H1 (cell line): ENCODE measurements at regions of chr1 and their contacts with region 1.

Region 1: GRCh38 chr1:16155532-16156410 is at the start of gene EPHA2:
- DNase-seq: peak; percentile 75 to 96
- H3K4me3 ChIP-seq: peak within 1 kb of the TSS; percentile 70 to 87 (median 81)
- H3K27ac ChIP-seq: peak within 1 kb of the TSS; percentile 53; the same call in 1 of the 2 replicates
- H3K4me1 ChIP-seq: peaks cover 5 to 41% (median 30%) of the 10 kb centered on the region in 4 experiments
- H3K27me3 ChIP-seq: peaks cover 0 to 10% (median 6%) of the 10 kb centered on the region in 4 experiments; a peak in 4 of 7 replicates
- CTCF ChIP-seq: no peak
- EP300 ChIP-seq: peak in 1 of 2 experiments; percentile 68; a peak in 1 of 3 replicates
- POLR2A ChIP-seq: peak in 1 of 2 experiments; percentile 95; a peak in 2 of 3 replicates
- RAD21 ChIP-seq: 0 out of 4 replicates have a peak, but pooled peaks of 1 of the 2 experiments have one; percentile 1
- total RNA-seq, gene EPHA2: 28.4 and 33.6 TPM in 2 replicates

Region 2: DNA sequence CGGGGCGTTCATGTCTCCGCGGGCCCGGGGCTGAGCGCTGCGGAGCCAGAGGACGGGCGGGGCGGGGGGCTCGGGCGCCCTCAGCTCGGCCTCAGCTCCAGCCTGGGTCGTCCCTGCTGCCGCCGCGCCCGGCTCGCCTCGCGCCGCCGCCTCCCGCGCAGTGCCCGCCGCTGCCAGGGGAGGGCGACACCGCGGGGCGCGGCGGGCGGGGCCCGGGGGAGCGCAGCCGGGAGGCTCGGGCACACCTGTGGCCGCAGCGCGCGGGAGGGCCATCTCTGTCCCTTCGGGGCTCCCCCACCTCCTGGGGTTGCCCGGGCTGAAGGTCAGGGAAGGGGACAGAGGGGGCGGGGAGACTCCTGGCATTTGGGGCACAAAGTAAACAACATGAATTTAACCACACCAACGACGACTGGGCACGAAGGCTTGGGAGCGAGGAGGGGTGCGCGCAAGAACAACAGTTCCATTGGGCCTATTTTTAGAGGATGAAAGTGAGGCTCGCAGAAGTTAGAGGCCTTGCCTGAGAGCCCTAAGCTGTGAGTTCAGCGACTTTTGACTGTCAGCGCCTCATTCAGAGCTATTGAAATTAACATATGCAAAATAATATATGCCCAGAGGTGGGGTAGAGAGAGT is 82.2 kb before region 1 on chr1 and contains the start of gene FAM131C:
- CTCF ChIA-PET with region 1: interaction called, 202 read pairs
- POLR2A ChIA-PET with region 1: no interaction called
- DNase-seq: peak in 1 of 2 experiments; percentile 75
- H3K4me3 ChIP-seq: peak within 1 kb of the TSS; percentile 40 to 69 (median 42)
- H3K27ac ChIP-seq: no peak within 1 kb of the TSS
- H3K4me1 ChIP-seq: peaks cover 2 to 19% (median 9%) of the 10 kb centered on the region in 4 experiments
- H3K27me3 ChIP-seq: peaks cover 4 to 38% (median 30%) of the 10 kb centered on the region in 4 experiments
- CTCF ChIP-seq: peak; percentile 42 to 74 (median 56)
- EP300 ChIP-seq: no peak
- POLR2A ChIP-seq: no peak
- RAD21 ChIP-seq: peak in 1 of 2 experiments; percentile 34; a peak in 2 of 4 replicates
- total RNA-seq, gene FAM131C: 0.25 and 0.78 TPM in 2 replicates

Region 3: GRCh38 chr1:16128338-16128741 is 27.4 kb before region 1 on chr1:
- CTCF ChIA-PET with region 1: interaction called, 16 read pairs
- POLR2A ChIA-PET with region 1: interaction called, 3 read pairs
- DNase-seq: no peak
- H3K4me3 ChIP-seq: no peak overlapping the region
- H3K27ac ChIP-seq: no peak overlapping the region
- H3K4me1 ChIP-seq: no peaks in the 10 kb centered on the region
- H3K27me3 ChIP-seq: no peaks in the 10 kb centered on the region
- CTCF ChIP-seq: no peak
- EP300 ChIP-seq: no peak
- POLR2A ChIP-seq: no peak
- RAD21 ChIP-seq: no peak

Region 4: GRCh38 chr1:16167331-16168143 is 11.8 kb after region 1 on chr1:
- CTCF ChIA-PET with region 1: interaction called, 43 read pairs
- POLR2A ChIA-PET with region 1: interaction called, 104 read pairs
- DNase-seq: peak; percentile 82 to 91
- H3K4me3 ChIP-seq: peak overlapping the region; percentile 36 to 68 (median 42)
- H3K27ac ChIP-seq: peak overlapping the region; percentile 43; the same call in 1 of the 2 replicates
- H3K4me1 ChIP-seq: peaks cover 4 to 22% (median 12%) of the 10 kb centered on the region in 4 experiments
- H3K27me3 ChIP-seq: no peaks in the 10 kb centered on the region; a peak in 2 of 7 replicates
- CTCF ChIP-seq: no peak
- EP300 ChIP-seq: 0 out of 3 replicates have a peak, but pooled peaks of 1 of the 2 experiments have one; percentile 12
- POLR2A ChIP-seq: peak in 1 of 2 experiments; percentile 66; a peak in 2 of 3 replicates
- RAD21 ChIP-seq: no peak

Region 5: GRCh38 chr1:16187748-16188401 is 32.1 kb after region 1 on chr1:
- CTCF ChIA-PET with region 1: interaction called, 11 read pairs
- POLR2A ChIA-PET with region 1: interaction called, 4 read pairs
- DNase-seq: peak in 1 of 2 experiments; percentile 95
- H3K4me3 ChIP-seq: no peak overlapping the region
- H3K27ac ChIP-seq: no peak overlapping the region
- H3K4me1 ChIP-seq: no peaks in the 10 kb centered on the region
- H3K27me3 ChIP-seq: no peaks in the 10 kb centered on the region; a peak in 1 of 7 replicates
- CTCF ChIP-seq: peak; percentile 92 to 98 (median 95)
- EP300 ChIP-seq: no peak
- POLR2A ChIP-seq: no peak
- RAD21 ChIP-seq: peak; percentile 100